Psoas muscle (tissue), 8 donors: ENCODE measurements at regions of chr13 and their contacts with region 1.

Region 1: DNA sequence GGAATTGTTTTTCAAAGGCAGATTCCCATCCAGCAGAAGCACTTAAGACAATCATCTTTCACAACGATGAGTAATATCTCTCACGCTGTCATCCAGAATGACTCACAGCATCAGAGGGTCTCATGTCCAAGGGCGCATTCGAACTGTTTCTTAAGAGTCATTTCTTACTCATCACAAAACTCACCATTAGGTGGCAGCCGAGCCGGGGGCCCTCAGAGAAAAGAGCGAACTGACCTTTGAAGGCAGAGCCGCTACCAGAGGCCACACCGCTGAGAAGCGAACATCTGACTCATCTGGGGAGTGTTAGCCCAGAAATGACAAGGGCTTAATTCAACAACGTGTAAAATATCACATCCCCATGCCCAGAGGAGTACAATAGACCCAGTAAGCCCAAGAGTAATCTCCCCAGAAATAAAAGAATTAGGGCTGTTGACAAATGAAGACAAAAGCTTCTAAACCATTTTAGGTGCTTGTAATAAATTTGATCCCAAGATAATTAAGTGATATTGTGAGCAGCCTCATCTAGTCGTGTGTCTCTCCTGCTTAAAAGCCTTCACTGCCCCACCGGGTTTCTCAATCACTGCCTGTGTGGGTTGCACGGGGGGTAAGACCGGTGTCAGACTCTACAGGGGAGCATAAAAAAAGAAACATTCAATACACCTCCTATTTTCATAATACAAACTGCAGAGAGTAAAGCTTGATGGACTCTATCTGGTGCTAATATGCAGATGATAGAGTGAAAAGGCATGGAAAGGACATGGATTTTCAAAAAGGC is 96.2 kb downstream of the CYSLTR2 start:
- DNase-seq: peak; percentile 85 to 90
- ATAC-seq: peak; percentile 86 to 98 (median 96)
- H3K4me3 ChIP-seq: no peak overlapping the region
- H3K27ac ChIP-seq: peak overlapping the region; percentile 53
- H3K4me1 ChIP-seq: peaks cover 4% of the 10 kb centered on the region
- H3K27me3 ChIP-seq: no peaks in the 10 kb centered on the region
- CTCF ChIP-seq: peak; percentile 47

Region 2: DNA sequence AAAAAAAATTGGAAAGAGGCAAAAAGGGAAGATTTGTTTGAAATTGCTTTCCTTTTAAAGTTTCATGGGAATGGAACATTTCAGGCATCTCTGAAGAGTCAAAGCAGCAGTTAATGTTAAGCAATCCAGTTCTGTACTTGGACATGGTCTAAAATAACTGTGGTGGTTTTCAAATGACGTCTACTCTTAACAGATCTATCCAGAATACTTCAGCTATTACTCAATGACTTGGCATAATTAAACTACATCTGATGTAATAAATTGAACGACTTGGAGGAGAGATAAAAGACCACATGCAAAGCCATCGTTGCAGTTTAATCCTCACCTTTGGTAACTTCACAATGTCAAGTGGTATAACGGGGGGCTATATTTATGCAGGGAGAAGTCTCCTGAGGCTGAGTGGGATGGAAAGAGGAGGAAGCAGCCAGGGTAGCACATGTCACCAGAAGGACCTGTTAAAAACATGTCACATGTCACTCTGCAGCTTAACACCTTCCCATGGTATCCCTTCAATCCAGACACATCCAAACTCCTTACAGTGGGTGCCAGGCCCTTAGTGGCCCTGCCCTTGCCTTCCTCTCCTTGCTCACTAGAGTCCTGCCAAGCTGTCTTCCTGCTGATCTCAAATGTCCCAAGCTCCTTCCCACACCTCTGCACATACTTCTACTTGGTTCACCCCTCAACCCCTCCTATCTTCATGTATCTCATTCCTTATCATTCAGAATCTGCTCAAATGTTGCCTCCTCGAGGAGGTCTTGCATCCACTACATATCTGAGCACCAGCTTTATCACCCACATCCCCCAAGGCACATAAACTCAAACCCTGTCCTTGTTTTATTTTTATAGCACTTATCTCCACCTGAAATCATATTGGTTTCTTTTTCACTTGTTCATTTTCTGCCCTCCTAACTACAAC is 1076.6 kb before region 1 on chr13:
- intact Hi-C with region 1: loop called in 1 of 2 experiments (anchors 5 kb)
- DNase-seq: no peak
- ATAC-seq: peak; percentile 88 to 93 (median 93)
- H3K4me3 ChIP-seq: no peak overlapping the region
- H3K27ac ChIP-seq: peak overlapping the region; percentile 56
- H3K4me1 ChIP-seq: peaks cover 14% of the 10 kb centered on the region
- H3K27me3 ChIP-seq: no peaks in the 10 kb centered on the region
- CTCF ChIP-seq: no peak